ENCODE measurements at regions of chr17 and their contacts with region 1.

Region 1: GRCh38 chr17:63478791-63479494 is 2.1 kb downstream of the ACE start:
- H3K4me3 ChIP-seq: no peak overlapping the region
- H3K27ac ChIP-seq: no peak overlapping the region
- H3K4me1 ChIP-seq: peaks cover 12% of the 10 kb centered on the region
- CTCF ChIP-seq: peak; percentile 95

Region 2: DNA sequence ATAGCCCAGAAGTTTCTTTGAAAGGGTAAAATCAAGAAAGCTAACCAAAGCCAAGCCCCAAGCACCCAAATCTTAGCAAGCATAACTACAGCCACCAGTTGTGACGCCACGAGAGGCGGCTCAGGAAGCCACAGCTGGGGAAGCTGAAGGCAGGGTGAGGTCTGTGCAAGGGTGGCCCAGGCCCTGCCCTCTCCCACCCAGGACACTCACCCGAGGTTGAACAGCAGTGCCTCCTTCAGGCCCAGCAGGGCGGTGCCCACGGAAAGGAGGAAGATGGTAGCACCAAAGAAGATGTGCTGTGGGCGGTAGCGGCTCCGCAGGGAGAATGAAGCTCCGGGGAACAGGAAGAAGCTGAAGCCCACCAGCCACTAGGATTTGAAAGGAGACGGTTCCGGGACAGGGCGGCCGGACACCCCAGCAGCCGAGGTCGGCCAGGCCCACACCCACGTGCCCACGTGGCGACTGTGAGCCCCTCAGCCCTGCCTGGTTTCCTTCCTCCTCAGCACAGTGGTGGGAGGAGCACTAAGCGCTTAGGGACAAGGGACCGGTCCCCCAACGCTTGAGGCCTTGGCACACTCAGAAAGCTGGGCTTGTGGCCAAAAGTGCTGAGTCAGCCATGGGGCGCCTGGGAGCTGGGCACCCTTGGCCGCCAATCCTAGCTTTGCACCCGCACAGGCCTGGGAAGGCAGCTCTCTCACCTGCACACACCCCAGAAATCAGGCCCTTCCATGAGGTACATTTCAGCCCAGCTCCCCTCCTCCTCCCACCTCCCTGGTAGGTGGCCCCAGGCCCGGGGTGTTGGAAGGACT is 43.9 kb before region 1 on chr17:
- CTCF ChIA-PET with region 1: interaction called, 74 read pairs
- POLR2A ChIA-PET with region 1: no interaction called
- H3K4me3 ChIP-seq: no peak overlapping the region
- H3K27ac ChIP-seq: no peak overlapping the region
- H3K4me1 ChIP-seq: no peaks in the 10 kb centered on the region; the same call in 1 of the 2 replicates
- CTCF ChIP-seq: no peak

Region 3: GRCh38 chr17:63445979-63446691 is 32.8 kb before region 1 on chr17 and contains the start of gene CYB561:
- CTCF ChIA-PET with region 1: interaction called, 35 read pairs
- POLR2A ChIA-PET with region 1: interaction called, 4 read pairs
- H3K4me3 ChIP-seq: peak within 1 kb of the TSS; percentile 41
- H3K27ac ChIP-seq: peak within 1 kb of the TSS; percentile 48; the same call in 1 of the 2 replicates
- H3K4me1 ChIP-seq: 0 out of 2 replicates have a peak, but pooled peaks cover 2% of the 10 kb centered on the region
- CTCF ChIP-seq: no peak

Region 4: DNA sequence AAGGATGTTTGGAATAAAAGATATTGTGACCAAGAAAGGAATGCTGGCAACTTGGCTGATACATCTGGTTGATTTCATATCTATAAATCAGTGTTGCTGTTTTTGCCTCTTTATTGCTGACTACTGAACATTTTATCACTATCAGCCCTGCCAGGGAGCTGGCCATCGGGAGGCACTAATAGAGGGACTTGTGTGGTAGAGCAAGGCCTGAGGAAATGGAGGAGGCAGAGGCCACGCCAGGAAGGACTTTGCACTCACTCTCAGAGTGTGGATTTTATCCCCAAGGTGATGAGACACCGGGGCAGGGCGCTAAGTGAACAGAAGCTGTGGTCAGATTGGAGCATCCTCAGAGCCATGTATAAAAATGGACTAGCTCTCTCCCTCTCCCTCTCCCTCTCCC is 23.5 kb before region 1 on chr17:
- CTCF ChIA-PET with region 1: interaction called, 27 read pairs
- POLR2A ChIA-PET with region 1: no interaction called
- H3K4me3 ChIP-seq: no peak overlapping the region
- H3K27ac ChIP-seq: no peak overlapping the region
- H3K4me1 ChIP-seq: no peaks in the 10 kb centered on the region
- CTCF ChIP-seq: no peak

Region 5: GRCh38 chr17:63497708-63498483 is 19.0 kb after region 1 on chr17:
- CTCF ChIA-PET with region 1: interaction called, 11 read pairs
- POLR2A ChIA-PET with region 1: no interaction called
- H3K4me3 ChIP-seq: no peak overlapping the region
- H3K27ac ChIP-seq: no peak overlapping the region
- H3K4me1 ChIP-seq: no peaks in the 10 kb centered on the region
- CTCF ChIP-seq: peak; percentile 55

Region 6: GRCh38 chr17:63571763-63572271 is 92.9 kb after region 1 on chr17:
- CTCF ChIA-PET with region 1: interaction called, 10 read pairs
- POLR2A ChIA-PET with region 1: no interaction called
- H3K4me3 ChIP-seq: no peak overlapping the region
- H3K27ac ChIP-seq: no peak overlapping the region
- H3K4me1 ChIP-seq: no peaks in the 10 kb centered on the region; the same call in 1 of the 2 replicates
- CTCF ChIP-seq: no peak

Measured in HEK293 (cell line).